PC-9 (cell line): ENCODE measurements at regions of chr12 and their contacts with region 1.

Region 1: DNA sequence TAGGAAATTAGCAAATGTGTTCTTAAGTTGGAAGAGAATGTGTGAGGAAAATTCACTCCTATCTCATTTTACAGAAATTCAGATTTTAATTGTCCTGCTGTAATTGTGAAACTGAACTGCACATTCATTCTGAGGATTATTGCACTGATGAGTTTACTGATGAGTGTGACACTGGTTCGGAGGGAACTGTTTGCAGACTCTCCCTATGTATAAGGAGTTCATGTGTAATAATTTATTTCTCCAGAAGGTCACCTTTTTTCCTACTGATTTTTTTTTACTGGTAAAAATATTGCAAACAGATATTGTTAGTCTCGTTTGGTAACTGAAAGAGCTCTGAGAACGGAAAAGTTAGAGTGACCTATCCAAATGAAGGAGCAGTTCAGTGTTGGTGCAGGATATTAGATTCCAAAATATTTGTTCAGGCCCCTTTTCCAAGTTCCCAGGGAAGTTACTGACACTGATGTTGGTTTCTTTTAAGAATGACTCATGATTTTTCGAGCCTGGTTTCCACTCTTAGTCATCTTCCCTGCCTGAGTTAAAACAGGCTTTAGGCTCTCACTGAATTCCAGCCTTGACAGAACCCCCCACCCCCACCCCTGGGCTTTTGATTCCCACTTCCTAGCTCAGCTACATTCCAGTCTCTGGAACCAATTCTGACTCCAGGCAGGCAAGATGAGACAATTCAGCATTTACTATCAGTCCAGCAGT is 18.4 kb downstream of the ANO6 start:
- DNase-seq: peak; percentile 47 to 97
- H3K4me3 ChIP-seq: peak overlapping the region; percentile 44; the same call in 1 of the 2 replicates
- H3K27ac ChIP-seq: peak overlapping the region; percentile 100
- H3K4me1 ChIP-seq: peaks cover 62% of the 10 kb centered on the region
- H3K27me3 ChIP-seq: no peaks in the 10 kb centered on the region
- CTCF ChIP-seq: no peak

Region 2: GRCh38 chr12:45215419-45216229 is 18.7 kb before region 1 on chr12 and contains the start of gene ANO6:
- CTCF ChIA-PET with region 1: no interaction called
- POLR2A ChIA-PET with region 1: interaction called, 3 read pairs
- intact Hi-C with region 1: loop called (anchors 1 kb)
- DNase-seq: peak; percentile 76 to 80
- H3K4me3 ChIP-seq: peak within 1 kb of the TSS; percentile 86
- H3K27ac ChIP-seq: peak within 1 kb of the TSS; percentile 93
- H3K4me1 ChIP-seq: peaks cover 38% of the 10 kb centered on the region
- H3K27me3 ChIP-seq: no peaks in the 10 kb centered on the region
- CTCF ChIP-seq: peak; percentile 55
- total RNA-seq, gene ANO6: 46.1 and 51.4 TPM in 2 replicates

Region 3: DNA sequence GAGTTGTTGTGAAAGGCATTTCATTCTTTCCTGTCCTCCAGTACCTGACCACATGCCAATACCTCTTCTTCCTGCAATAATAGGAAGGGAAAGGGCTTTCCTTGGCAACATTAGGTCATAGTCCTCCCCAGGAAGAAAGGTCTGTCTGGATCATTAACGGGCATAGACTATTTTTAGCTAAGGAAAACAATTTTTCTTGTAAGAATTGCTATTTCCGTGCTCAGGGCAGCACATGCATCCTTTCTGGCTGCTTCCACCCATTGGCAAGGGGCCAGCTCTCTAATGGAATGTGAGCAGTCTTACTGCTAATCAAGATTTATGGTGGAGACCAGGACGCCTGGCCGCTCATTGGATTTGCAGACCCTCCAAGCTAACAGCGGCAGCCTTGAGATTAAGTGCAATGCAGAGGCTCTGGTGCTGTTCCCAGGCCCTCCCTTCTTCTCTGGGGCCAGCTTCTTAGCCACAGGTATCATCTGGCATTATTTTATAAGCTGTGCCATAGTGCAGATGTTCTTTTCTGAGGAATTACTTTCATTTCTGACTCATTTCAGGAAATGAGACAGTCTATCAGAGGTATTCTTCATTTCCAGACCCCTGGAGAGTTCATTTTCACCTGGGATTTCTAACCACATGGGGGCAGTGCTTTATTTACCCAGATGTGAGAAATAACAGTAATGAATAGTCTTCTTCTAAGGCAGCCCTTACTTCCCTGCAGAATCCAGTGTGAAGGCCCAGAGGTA is 34.5 kb after region 1 on chr12:
- CTCF ChIA-PET with region 1: no interaction called
- POLR2A ChIA-PET with region 1: interaction called, 4 read pairs
- intact Hi-C with region 1: loop called (anchors 1 kb)
- DNase-seq: peak; percentile 77 to 91
- H3K4me3 ChIP-seq: peak overlapping the region; percentile 30; the same call in 1 of the 2 replicates
- H3K27ac ChIP-seq: peak overlapping the region; percentile 94
- H3K4me1 ChIP-seq: peaks cover 67% of the 10 kb centered on the region
- H3K27me3 ChIP-seq: no peaks in the 10 kb centered on the region
- CTCF ChIP-seq: peak; percentile 70

Region 4: DNA sequence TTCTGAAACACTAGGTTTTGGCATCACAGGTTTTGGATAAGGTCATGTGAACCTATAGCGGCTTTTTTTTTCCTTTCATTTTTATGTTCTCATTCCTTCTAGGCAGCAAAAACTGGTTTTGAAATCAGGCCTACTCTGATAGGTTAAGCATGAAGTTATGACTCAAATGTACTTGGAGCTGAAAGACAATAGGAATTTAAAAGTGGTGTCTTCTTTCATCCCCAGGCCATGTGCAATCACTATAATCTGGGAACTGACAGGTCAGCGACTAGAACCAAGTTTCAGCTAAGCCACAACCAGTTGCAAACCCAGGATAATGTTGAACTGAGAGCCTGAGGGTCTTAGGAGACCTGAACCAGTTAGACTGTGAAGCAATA is 55.9 kb after region 1 on chr12:
- CTCF ChIA-PET with region 1: no interaction called
- POLR2A ChIA-PET with region 1: interaction called, 12 read pairs
- intact Hi-C with region 1: loop called (anchors 2 kb)
- DNase-seq: peak in 1 of 2 experiments; percentile 78
- H3K4me3 ChIP-seq: no peak overlapping the region
- H3K27ac ChIP-seq: no peak overlapping the region
- H3K4me1 ChIP-seq: peaks cover 28% of the 10 kb centered on the region
- H3K27me3 ChIP-seq: no peaks in the 10 kb centered on the region
- CTCF ChIP-seq: no peak

Region 5: GRCh38 chr12:45500157-45500556 is 265.9 kb after region 1 on chr12:
- CTCF ChIA-PET with region 1: no interaction called
- POLR2A ChIA-PET with region 1: no interaction called
- intact Hi-C with region 1: no loop called
- DNase-seq: no peak
- H3K4me3 ChIP-seq: no peak overlapping the region
- H3K27ac ChIP-seq: no peak overlapping the region
- H3K4me1 ChIP-seq: no peaks in the 10 kb centered on the region
- H3K27me3 ChIP-seq: no peaks in the 10 kb centered on the region
- CTCF ChIP-seq: no peak

Region 6: GRCh38 chr12:45655201-45655600 is 420.9 kb after region 1 on chr12:
- CTCF ChIA-PET with region 1: no interaction called
- POLR2A ChIA-PET with region 1: no interaction called
- intact Hi-C with region 1: no loop called
- DNase-seq: peak in 1 of 2 experiments; percentile 47
- H3K4me3 ChIP-seq: no peak overlapping the region
- H3K27ac ChIP-seq: no peak overlapping the region
- H3K4me1 ChIP-seq: no peaks in the 10 kb centered on the region
- H3K27me3 ChIP-seq: no peaks in the 10 kb centered on the region
- CTCF ChIP-seq: no peak

Region 7: DNA sequence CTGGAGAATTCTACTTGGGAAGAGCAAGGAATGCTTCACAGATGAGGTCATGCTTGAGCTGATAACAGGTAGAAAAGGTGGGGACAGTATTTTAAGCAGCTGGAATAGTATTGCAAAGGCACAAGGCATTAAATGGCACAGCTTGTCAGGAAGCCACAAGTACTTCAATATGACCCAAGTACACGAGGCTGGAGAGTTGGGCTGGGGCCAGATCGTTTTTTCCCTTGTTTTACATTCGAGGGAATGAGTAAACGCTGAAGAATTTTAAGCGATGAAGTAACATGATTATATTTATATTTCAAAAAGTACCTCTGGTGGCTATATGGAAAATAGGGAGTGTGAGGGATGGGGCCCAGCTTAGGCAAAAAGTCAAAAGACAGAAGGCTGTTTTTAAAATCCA is 440.3 kb after region 1 on chr12:
- CTCF ChIA-PET with region 1: no interaction called
- POLR2A ChIA-PET with region 1: no interaction called
- intact Hi-C with region 1: no loop called
- DNase-seq: peak; percentile 80 to 90
- H3K4me3 ChIP-seq: no peak overlapping the region
- H3K27ac ChIP-seq: peak overlapping the region; percentile 6; the same call in 1 of the 2 replicates
- H3K4me1 ChIP-seq: peaks cover 21% of the 10 kb centered on the region
- H3K27me3 ChIP-seq: no peaks in the 10 kb centered on the region
- CTCF ChIP-seq: no peak